ENCODE measurements at regions of chr3 and their contacts with region 1.

Region 1: GRCh38 chr3:48609088-48610005 is at the start of gene UQCRC1:
- DNase-seq: peak; percentile 79 to 93
- H3K4me3 ChIP-seq: peak within 1 kb of the TSS; percentile 65
- H3K27ac ChIP-seq: peak within 1 kb of the TSS; percentile 54
- H3K4me1 ChIP-seq: peaks cover 22% of the 10 kb centered on the region
- H3K27me3 ChIP-seq: no peaks in the 10 kb centered on the region
- CTCF ChIP-seq: peak; percentile 60; the same call in 1 of the 2 replicates
- total RNA-seq, gene UQCRC1: 255 and 264 TPM in 2 replicates

Region 2: GRCh38 chr3:48142316-48142870 is 467.0 kb before region 1 on chr3:
- CTCF ChIA-PET with region 1: no interaction called
- POLR2A ChIA-PET with region 1: no interaction called
- intact Hi-C with region 1: no loop called
- DNase-seq: peak in 1 of 2 experiments; percentile 53
- H3K4me3 ChIP-seq: no peak overlapping the region
- H3K27ac ChIP-seq: no peak overlapping the region
- H3K4me1 ChIP-seq: no peaks in the 10 kb centered on the region
- H3K27me3 ChIP-seq: no peaks in the 10 kb centered on the region
- CTCF ChIP-seq: no peak

Region 3: DNA sequence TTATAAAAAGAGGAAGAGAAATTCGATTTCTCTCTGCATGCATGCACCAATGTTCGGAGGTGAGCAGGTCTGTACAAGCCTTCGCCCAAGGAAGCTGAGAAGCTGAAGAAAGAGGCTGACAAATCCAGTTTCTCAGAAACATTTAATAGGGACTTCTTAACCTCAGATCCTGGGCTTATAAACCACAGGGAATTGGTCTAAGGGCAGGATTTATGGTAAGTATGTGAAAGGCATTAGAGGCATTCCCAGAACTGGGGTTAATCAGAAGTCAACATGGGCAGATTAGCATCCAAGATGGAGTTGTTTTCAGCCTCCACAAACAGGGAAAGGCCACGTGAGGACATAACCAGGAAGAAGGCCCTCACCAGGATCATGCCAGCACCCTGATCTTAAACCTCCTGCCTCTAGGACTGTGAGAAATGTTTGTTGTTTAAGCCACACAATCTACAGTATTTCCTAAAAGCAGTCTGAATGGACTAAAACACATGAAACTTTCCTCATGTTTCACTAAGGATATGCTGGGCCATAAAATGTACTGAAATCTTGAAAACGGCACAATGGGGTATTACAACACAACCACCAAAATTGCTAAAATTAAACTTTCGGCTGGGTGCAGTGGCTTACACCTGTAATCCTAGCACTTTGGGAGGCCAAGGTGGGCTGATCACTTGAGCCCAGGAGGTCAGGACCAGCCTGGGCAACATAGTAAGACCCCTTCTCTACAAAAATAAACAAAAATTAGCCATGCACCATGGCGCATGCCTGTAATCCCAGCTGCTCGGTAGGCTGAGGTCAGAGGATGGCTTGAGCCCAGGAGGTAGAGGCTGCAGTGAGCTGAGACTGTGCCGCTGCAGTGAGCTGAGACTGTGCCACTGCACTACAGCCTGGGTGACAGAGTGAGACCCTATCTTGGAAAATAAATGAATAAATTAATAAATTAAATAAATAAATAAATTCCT is 116.5 kb before region 1 on chr3:
- CTCF ChIA-PET with region 1: no interaction called
- POLR2A ChIA-PET with region 1: no interaction called
- intact Hi-C with region 1: no loop called
- DNase-seq: no peak
- H3K4me3 ChIP-seq: no peak overlapping the region
- H3K27ac ChIP-seq: no peak overlapping the region
- H3K4me1 ChIP-seq: no peaks in the 10 kb centered on the region
- H3K27me3 ChIP-seq: no peaks in the 10 kb centered on the region
- CTCF ChIP-seq: no peak

Region 4: GRCh38 chr3:48595526-48596121 is 13.7 kb before region 1 on chr3:
- CTCF ChIA-PET with region 1: interaction called, 17 read pairs
- POLR2A ChIA-PET with region 1: no interaction called
- intact Hi-C with region 1: loop called (anchors 1 kb)
- DNase-seq: peak; percentile 86 to 98
- H3K4me3 ChIP-seq: peak overlapping the region; percentile 62; the same call in 1 of the 2 replicates
- H3K27ac ChIP-seq: peak overlapping the region; percentile 14
- H3K4me1 ChIP-seq: peaks cover 53% of the 10 kb centered on the region
- H3K27me3 ChIP-seq: no peaks in the 10 kb centered on the region
- CTCF ChIP-seq: no peak

Region 5: GRCh38 chr3:48652923-48653715 is 43.8 kb after region 1 on chr3:
- CTCF ChIA-PET with region 1: no interaction called
- POLR2A ChIA-PET with region 1: no interaction called
- intact Hi-C with region 1: loop called (anchors 1 kb)
- DNase-seq: peak; percentile 58
- H3K4me3 ChIP-seq: no peak overlapping the region
- H3K27ac ChIP-seq: no peak overlapping the region
- H3K4me1 ChIP-seq: no peaks in the 10 kb centered on the region
- H3K27me3 ChIP-seq: no peaks in the 10 kb centered on the region
- CTCF ChIP-seq: no peak

Measured in PC-9 (cell line).